PC-3 (cell line): ENCODE measurements at regions of chr3 and their contacts with region 1.

Region 1: DNA sequence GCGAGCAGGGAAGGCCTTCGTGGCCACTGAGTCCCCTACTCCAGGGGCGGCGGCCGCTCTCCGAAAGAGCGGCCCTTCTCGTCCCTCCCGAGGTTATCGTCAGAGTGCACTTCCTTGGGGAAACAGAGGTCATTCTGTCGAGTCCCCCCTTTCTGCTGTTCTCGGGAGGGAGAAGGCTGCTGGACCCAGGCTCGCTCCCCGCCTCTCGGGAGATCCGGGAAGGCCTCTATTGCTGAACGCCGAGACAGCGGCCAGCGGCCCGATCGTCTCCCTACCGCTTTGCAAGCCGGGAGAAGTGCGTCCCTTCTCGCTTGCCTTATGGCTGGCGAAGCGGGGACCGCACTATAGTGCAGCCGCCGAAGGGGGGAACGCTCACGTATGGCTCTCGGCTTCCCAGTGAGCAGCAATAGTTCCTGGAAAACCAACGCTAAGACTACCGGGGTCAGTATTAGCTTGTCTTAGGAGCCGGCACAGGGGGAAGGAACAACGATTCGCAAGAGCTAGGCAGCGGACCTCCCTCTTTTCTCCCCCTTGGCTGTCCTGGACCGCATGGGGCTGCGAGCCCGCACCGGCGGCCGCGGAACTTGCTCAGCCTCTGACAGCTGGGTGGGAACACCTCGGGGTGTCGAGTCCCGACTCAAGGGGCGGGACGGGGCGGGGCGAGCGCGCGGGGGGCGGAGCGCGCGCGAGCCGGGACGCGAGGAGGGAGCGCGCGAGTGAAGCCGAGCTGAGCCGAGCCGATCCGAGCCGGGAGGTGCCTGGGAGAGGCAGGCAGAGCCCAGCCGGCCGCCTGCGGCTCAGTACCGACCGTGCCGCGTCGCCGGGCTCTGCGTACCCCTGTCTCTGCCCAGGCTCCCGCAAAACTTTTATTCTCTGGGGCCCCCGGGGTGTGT is 930 bp upstream of the PPM1L start:
- DNase-seq: peak; percentile 96
- ATAC-seq: peak; percentile 89
- H3K4me3 ChIP-seq: peak overlapping the region; percentile 88
- H3K27ac ChIP-seq: peak overlapping the region; percentile 50
- H3K4me1 ChIP-seq: peaks cover 5% of the 10 kb centered on the region; the same call in 1 of the 2 replicates
- H3K27me3 ChIP-seq: no peaks in the 10 kb centered on the region
- CTCF ChIP-seq: no peak

Region 2: GRCh38 chr3:160449636-160450598 is 305.2 kb before region 1 on chr3 and contains the start of gene TRIM59:
- CTCF ChIA-PET with region 1: no interaction called
- POLR2A ChIA-PET with region 1: no interaction called
- intact Hi-C with region 1: no loop called
- DNase-seq: peak; percentile 97
- ATAC-seq: peak; percentile 87
- H3K4me3 ChIP-seq: peak within 1 kb of the TSS; percentile 76
- H3K27ac ChIP-seq: peak within 1 kb of the TSS; percentile 69
- H3K4me1 ChIP-seq: peaks cover 42% of the 10 kb centered on the region
- H3K27me3 ChIP-seq: no peaks in the 10 kb centered on the region
- CTCF ChIP-seq: no peak
- total RNA-seq, gene TRIM59: 25.3 and 26.4 TPM in 2 replicates

Region 3: GRCh38 chr3:160784848-160785247 is 29.7 kb after region 1 on chr3:
- CTCF ChIA-PET with region 1: no interaction called
- POLR2A ChIA-PET with region 1: no interaction called
- intact Hi-C with region 1: loop called (anchors 2 kb)
- DNase-seq: peak; percentile 89
- ATAC-seq: peak; percentile 83
- H3K4me3 ChIP-seq: peak overlapping the region; percentile 46; the same call in 1 of the 2 replicates
- H3K27ac ChIP-seq: peak overlapping the region; percentile 84
- H3K4me1 ChIP-seq: peaks cover 15% of the 10 kb centered on the region
- H3K27me3 ChIP-seq: no peaks in the 10 kb centered on the region
- CTCF ChIP-seq: no peak

Region 4: DNA sequence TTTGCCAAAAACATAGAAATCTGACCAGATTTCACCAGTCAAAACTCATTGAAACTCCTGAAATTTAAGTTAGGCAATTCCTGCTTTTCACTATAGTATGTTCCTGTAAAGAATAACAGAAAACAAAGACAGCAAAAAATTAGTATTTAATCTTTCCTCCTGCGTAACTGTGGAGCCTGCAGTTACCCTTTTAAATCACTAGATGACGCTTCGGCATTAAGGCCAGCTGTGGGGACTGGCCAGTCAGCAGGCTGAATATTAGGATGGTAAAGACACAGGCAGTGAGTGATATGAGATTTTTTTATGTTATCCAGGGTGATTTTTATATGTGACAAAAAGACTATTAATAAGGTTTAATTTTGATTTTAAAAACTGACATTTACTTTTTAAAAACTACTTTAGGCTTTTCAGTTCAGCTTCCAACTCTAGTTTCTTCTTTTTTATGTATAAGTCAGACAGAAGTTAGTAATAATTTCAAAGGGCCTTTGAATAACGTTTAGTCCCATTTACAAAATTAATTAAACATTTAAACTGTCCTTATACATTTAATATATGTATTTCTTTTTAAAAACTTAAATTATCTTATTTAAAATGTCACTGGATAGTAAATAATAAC is 166.0 kb after region 1 on chr3:
- CTCF ChIA-PET with region 1: no interaction called
- POLR2A ChIA-PET with region 1: no interaction called
- intact Hi-C with region 1: loop called (anchors 5 kb)
- DNase-seq: peak; percentile 75
- ATAC-seq: peak; percentile 94
- H3K4me3 ChIP-seq: no peak overlapping the region
- H3K27ac ChIP-seq: no peak overlapping the region
- H3K4me1 ChIP-seq: no peaks in the 10 kb centered on the region
- H3K27me3 ChIP-seq: no peaks in the 10 kb centered on the region
- CTCF ChIP-seq: peak; percentile 95